Esophagus squamous epithelium (tissue), 5 donors: ENCODE measurements at regions of chr9 and their contacts with region 1.

Region 1: GRCh38 chr9:4489919-4490704 is at the start of gene SLC1A1:
- DNase-seq: no peak
- H3K4me3 ChIP-seq: peak within 1 kb of the TSS; percentile 63 to 88 (median 74)
- H3K27ac ChIP-seq: peak within 1 kb of the TSS; percentile 58 to 85 (median 76)
- H3K4me1 ChIP-seq: peaks cover 8 to 33% (median 11%) of the 10 kb centered on the region in 3 donors
- H3K27me3 ChIP-seq: peaks cover 0 to 12% (median 0%) of the 10 kb centered on the region in 4 donors
- CTCF ChIP-seq: no peak
- POLR2A ChIP-seq: peak in 1 of 4 donors; percentile 26
- total RNA-seq, gene SLC1A1: 2.3 to 4.3 (median 3.1) TPM

Region 2: DNA sequence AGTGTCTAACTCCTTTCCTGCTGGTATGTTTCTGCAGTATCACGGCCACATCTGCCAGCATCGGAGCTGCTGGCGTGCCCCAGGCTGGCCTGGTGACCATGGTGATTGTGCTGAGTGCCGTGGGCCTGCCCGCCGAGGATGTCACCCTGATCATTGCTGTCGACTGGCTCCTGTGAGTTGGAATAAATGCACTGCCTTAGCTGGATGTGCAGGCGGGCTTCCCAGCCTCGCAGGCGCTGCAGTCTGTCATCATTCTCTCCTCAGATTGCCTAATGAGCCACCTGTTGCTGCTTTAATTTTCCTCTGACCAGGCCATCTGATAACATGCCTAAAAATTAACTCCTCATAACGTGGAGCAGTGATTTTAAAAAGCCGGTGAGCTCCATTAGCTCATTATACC is 92.9 kb after region 1 on chr9:
- intact Hi-C with region 1: loop called (anchors 10 kb)
- DNase-seq: no peak
- H3K4me3 ChIP-seq: no peak overlapping the region
- H3K27ac ChIP-seq: no peak overlapping the region
- H3K4me1 ChIP-seq: peaks cover 0 to 12% (median 0%) of the 10 kb centered on the region in 3 donors
- H3K27me3 ChIP-seq: no peaks in the 10 kb centered on the region
- CTCF ChIP-seq: no peak
- POLR2A ChIP-seq: no peak

Region 3: DNA sequence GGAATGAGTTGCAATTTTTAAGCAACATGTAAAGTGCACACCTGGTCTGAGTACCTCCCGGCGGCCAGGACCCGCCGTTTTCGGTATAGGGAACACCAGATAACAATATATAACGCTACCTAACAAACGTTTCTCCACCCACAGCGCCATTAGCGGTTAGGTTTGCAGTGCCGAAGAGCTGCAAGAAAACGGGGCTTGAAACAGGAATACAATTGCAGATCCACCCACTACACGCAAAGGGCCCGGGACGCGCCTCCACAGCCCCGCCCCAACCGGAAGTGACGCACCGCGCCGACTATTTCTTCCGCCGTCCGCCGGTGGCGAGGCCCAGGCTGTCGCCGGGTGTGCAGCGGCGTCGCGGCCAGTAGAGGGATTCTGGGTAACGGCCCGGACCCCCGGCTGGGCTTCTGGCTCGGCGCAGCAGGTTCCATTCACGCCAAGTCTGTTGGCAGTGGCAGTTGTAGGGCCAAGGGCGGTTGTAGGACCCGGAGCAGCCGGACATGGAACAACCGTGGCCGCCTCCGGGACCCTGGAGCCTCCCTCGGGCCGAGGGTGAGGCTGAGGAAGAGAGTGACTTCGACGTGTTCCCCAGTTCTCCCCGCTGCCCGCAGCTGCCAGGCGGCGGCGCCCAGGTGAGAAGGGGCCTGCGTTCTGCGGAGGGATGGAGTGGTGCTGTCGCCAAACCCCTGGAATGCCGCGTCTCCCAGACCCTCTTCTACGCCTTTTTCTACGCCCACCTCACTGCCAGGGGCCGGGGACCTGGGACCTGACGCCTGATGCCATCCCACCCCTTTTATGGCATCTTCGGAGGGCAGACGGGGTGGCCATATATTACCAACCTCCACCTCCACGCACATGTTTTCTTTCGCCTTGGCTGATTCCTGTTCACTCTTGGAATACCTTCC is 189.4 kb after region 1 on chr9 and contains the start of gene CDC37L1:
- intact Hi-C with region 1: no loop called
- DNase-seq: peak; percentile 86
- H3K4me3 ChIP-seq: peak within 1 kb of the TSS; percentile 71 to 93 (median 88)
- H3K27ac ChIP-seq: peak within 1 kb of the TSS; percentile 95 to 99 (median 98)
- H3K4me1 ChIP-seq: peaks cover 0 to 59% (median 14%) of the 10 kb centered on the region in 3 donors
- H3K27me3 ChIP-seq: no peaks in the 10 kb centered on the region
- CTCF ChIP-seq: peak; percentile 56 to 92 (median 82)
- POLR2A ChIP-seq: peak in 3 of 4 donors; percentile 87 to 99 (median 96)
- total RNA-seq, gene CDC37L1: 8.9 to 48.8 (median 19.3) TPM